ENCODE measurements at regions of chr16 and their contacts with region 1.

Region 1: GRCh38 chr16:73067671-73068540 is 20.0 kb upstream of the ZFHX3 start:
- DNase-seq: no peak
- ATAC-seq: no peak
- H3K4me3 ChIP-seq: no peak overlapping the region
- H3K27ac ChIP-seq: peak overlapping the region; percentile 92
- H3K4me1 ChIP-seq: peaks cover 35% of the 10 kb centered on the region
- H3K27me3 ChIP-seq: no peaks in the 10 kb centered on the region
- CTCF ChIP-seq: no peak

Region 2: DNA sequence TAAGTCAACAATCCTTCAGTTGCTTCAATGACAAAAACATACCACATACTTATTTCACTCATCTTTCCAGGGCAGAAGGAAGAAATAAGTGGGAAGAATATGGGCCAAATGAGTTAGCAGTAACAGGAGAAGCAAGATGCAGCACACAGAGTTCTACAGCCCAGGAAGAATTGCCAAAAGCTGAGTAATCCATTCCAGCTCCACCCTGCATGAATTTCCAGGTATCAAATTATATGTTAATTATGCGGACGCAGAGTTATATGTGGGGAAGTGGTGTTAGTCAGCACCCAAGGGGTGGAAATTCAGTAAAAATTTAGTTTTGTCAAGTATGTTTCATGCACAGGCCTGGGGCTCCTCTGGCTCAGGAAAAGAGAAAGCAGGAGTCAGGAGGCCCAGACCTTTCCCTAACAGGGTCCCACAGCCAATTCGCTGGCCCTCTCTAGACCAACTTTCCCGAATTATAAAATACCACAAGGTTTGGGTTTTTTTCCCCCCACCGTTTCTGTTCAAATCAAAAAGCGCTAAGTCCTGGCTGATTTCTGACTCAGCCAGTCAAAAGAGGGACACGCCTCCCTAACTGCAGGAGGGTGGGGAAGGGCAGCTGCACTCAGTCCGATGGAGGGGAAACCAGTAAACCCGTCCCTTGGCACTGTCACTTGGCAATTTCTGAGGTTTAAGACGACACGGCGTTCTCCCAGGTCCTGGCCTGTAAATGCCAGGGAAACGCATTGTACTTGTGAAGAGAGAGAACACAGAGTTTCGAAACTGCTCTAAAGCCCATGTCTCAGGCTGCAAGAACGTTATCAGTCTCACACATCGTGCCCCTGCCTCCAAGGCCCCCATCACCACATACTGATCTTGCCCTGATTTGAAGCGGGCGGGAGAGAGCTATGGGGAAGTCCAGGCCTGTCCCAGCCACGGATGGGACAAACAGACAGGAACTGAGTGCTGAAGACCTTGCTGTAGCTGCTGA is 78.0 kb before region 1 on chr16:
- CTCF ChIA-PET with region 1: no interaction called
- POLR2A ChIA-PET with region 1: no interaction called
- intact Hi-C with region 1: no loop called
- DNase-seq: peak; percentile 94
- ATAC-seq: peak; percentile 85
- H3K4me3 ChIP-seq: peak overlapping the region; percentile 61
- H3K27ac ChIP-seq: peak overlapping the region; percentile 99
- H3K4me1 ChIP-seq: peaks cover 51% of the 10 kb centered on the region
- H3K27me3 ChIP-seq: no peaks in the 10 kb centered on the region
- CTCF ChIP-seq: no peak

Region 3: DNA sequence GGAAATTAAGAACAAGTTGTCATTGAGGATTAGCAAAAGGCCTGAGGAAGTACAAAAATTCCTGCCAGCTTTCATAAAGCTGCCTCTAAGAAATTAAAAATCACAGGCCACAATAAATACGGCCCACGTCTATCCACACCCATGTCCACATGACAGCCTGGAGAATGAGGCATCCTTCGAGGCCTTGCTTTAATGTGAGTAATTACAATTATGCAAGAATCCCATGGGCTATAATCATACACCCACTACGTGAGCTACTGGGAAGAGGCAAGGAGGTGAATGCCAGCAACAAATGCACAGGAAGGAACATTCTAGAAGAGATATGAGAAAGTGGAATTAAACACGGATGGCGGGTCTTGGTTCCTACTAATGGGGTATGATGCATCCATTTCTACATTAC is 45.4 kb after region 1 on chr16:
- CTCF ChIA-PET with region 1: no interaction called
- POLR2A ChIA-PET with region 1: interaction called, 12 read pairs
- intact Hi-C with region 1: no loop called
- DNase-seq: no peak
- ATAC-seq: no peak
- H3K4me3 ChIP-seq: no peak overlapping the region
- H3K27ac ChIP-seq: no peak overlapping the region
- H3K4me1 ChIP-seq: no peaks in the 10 kb centered on the region
- H3K27me3 ChIP-seq: no peaks in the 10 kb centered on the region
- CTCF ChIP-seq: no peak

Measured in PC-3 (cell line).